Natural killer cell (primary cell): ENCODE measurements at regions of chr16 and their contacts with region 1.

Region 1: GRCh38 chr16:11915644-11916523 is at the start of gene GSPT1:
- DNase-seq: peak; percentile 98
- ATAC-seq: peak; percentile 90 to 98 (median 93)
- H3K4me3 ChIP-seq: peak within 1 kb of the TSS; percentile 79
- H3K4me3 Mint-ChIP-seq: peak within 1 kb of the TSS; percentile 89
- H3K27ac ChIP-seq: peak within 1 kb of the TSS; percentile 85
- H3K27ac Mint-ChIP-seq: peak within 1 kb of the TSS; percentile 78 to 90
- H3K4me1 ChIP-seq: peaks cover 12% of the 10 kb centered on the region
- H3K4me1 Mint-ChIP-seq: peaks cover 33 to 41% of the 10 kb centered on the region in 2 donors
- H3K27me3 ChIP-seq: no peaks in the 10 kb centered on the region
- H3K27me3 Mint-ChIP-seq: peaks cover 0 to 8% of the 10 kb centered on the region in 2 donors
- CTCF ChIP-seq: no peak
- total RNA-seq, gene GSPT1: 51.4 to 77.8 (median 60.8) TPM

Region 2: DNA sequence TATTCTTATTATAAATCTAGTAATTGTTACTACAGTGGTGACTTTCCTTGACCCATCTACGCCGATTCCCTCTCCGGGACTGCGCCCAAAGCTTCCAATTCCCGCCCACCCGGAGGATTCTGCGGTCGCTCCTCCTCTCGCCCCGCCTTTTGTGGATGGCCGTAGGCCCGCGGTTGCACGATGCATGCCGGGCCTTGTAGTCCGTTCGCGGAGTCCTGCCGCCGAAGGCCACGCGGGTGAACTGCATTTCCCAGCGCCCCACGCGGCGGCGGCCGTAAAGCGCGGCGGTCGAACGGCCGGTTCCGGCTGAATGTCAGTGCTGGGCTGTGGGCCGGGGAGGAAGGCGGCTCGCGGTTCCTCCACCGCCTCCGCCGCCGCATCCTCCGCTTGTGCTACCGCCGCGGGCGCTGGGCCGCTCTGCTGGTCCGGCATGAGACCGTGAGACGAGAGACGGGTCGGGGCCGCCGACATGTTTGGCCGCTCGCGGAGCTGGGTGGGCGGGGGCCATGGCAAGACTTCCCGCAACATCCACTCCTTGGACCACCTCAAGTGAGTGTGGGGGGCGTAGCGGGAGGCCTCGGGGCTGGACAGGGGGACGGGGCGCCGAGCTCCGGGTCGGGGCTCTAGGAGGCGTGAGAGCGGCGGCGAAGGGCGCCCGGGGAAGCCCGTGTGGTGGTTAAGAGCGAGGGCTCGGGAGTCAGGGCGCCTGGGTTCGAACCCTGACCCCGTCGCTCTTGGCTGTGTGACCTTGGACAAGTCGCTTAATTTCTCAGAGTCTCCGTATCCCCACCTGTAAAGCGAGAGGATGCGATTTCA is 971.4 kb before region 1 on chr16 and contains the start of gene CLEC16A:
- intact Hi-C with region 1: loop called (anchors 1 kb)
- DNase-seq: peak; percentile 96
- ATAC-seq: peak; percentile 77 to 91 (median 81)
- H3K4me3 ChIP-seq: peak within 1 kb of the TSS; percentile 90
- H3K4me3 Mint-ChIP-seq: peak within 1 kb of the TSS; percentile 88
- H3K27ac ChIP-seq: peak within 1 kb of the TSS; percentile 50
- H3K27ac Mint-ChIP-seq: peak within 1 kb of the TSS; percentile 65 to 93
- H3K4me1 ChIP-seq: peaks cover 54% of the 10 kb centered on the region
- H3K4me1 Mint-ChIP-seq: peaks cover 56 to 67% of the 10 kb centered on the region in 2 donors
- H3K27me3 ChIP-seq: no peaks in the 10 kb centered on the region
- H3K27me3 Mint-ChIP-seq: no peaks in the 10 kb centered on the region
- CTCF ChIP-seq: no peak
- total RNA-seq, gene CLEC16A: 35.9 to 50.5 (median 37.4) TPM

Region 3: DNA sequence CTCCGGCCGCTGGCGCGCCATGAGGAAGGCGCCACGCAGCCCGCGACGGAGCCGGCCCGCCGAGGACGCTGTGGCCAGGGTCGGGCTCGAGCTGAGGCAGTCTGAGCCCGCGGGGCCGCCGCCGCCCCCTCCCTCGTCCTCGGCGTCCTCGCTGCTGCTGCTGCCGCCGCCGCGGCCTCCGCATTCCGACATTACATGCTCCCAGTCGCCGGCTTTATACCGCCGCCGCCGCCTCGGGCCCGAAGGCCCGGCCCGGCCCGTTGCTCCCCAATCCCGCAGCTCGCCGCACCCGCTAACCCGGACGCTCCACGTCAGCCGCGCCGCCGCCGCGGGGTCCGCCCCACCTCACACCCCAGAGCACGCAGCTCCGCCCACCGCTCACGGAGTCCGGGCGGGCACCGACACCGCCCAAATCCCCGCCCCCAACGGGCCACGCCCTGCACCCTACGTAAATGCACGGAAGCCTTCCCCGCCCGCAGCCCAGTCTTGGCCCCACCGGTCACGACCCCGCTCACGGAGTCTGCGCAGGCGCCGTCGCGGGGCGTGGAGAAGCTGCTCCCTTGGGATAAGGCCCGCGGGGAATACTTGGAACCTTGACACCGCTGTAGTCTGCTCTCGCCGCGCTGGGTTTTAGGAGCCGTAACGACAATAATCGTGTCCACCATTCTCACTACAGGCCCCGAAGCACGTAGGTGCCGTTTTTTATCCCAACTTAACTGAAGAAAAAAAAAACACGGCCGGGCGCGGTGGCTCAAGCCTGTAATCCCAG is 173.2 kb before region 1 on chr16 and contains the start of gene TXNDC11:
- intact Hi-C with region 1: loop called (anchors 1 kb)
- DNase-seq: peak; percentile 99 to 100
- ATAC-seq: peak; percentile 88 to 98 (median 90)
- H3K4me3 ChIP-seq: peak within 1 kb of the TSS; percentile 93
- H3K4me3 Mint-ChIP-seq: peak within 1 kb of the TSS; percentile 97
- H3K27ac ChIP-seq: peak within 1 kb of the TSS; percentile 89
- H3K27ac Mint-ChIP-seq: peak within 1 kb of the TSS; percentile 92 to 94
- H3K4me1 ChIP-seq: peaks cover 33% of the 10 kb centered on the region
- H3K4me1 Mint-ChIP-seq: peaks cover 51 to 54% of the 10 kb centered on the region in 2 donors
- H3K27me3 ChIP-seq: no peaks in the 10 kb centered on the region
- H3K27me3 Mint-ChIP-seq: no peaks in the 10 kb centered on the region
- CTCF ChIP-seq: no peak
- total RNA-seq, gene TXNDC11: 63.4 to 99.2 (median 68.9) TPM

Region 4: GRCh38 chr16:11783319-11784037 is 132.4 kb before region 1 on chr16:
- intact Hi-C with region 1: loop called (anchors 10 kb)
- DNase-seq: peak; percentile 39 to 91
- ATAC-seq: peak; percentile 83 to 90 (median 84)
- H3K4me3 ChIP-seq: peak overlapping the region; percentile 30
- H3K4me3 Mint-ChIP-seq: peak overlapping the region; percentile 89
- H3K27ac ChIP-seq: peak overlapping the region; percentile 99
- H3K27ac Mint-ChIP-seq: peak overlapping the region; percentile 99 to 100
- H3K4me1 ChIP-seq: peaks cover 30% of the 10 kb centered on the region
- H3K4me1 Mint-ChIP-seq: peaks cover 47 to 51% of the 10 kb centered on the region in 2 donors
- H3K27me3 ChIP-seq: no peaks in the 10 kb centered on the region
- H3K27me3 Mint-ChIP-seq: no peaks in the 10 kb centered on the region
- CTCF ChIP-seq: no peak

Region 5: DNA sequence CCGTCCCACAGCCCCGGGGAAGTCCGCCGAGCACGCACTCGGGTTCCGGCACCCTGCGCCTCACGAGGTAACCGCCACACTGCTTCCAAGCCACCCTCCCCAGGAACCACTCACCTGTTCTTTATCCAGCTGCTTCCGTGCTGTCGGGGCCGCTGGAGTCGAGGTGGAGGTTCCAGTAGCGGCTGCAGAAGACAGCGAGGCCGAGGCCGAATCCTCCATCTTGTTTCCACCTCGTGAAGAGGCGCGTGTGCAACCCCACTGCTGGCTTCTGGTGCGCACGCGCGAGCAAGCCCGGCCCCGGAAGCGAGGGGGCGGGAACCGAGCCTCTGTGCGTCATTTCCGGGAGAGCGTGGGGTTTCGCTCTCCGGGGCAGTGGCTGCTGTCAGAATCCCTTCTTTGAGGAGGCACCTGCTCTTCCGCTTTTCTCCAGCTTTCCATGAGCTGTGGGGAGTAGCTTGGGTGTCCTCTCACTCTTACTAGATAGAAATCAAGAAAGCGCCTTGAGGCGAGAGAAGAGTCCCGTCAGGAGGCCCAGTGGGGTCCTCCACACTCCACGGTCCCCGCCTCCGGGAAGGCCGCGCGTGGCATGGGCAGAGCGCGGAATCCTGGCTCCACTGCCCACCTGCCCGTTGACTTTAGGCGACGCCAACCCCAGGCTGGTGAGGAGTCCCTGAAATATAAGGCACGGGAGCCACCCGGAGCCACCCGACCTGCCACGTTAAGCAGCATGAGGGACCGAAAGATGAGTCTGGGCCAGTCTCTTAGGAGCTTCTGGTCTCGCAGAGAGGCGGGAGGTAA is 64.4 kb before region 1 on chr16 and contains the start of gene RSL1D1:
- intact Hi-C with region 1: loop called (anchors 2 kb)
- DNase-seq: peak; percentile 98
- ATAC-seq: peak; percentile 80 to 91 (median 85)
- H3K4me3 ChIP-seq: peak within 1 kb of the TSS; percentile 91
- H3K4me3 Mint-ChIP-seq: peak within 1 kb of the TSS; percentile 99
- H3K27ac ChIP-seq: peak within 1 kb of the TSS; percentile 87
- H3K27ac Mint-ChIP-seq: peak within 1 kb of the TSS; percentile 97 to 98
- H3K4me1 ChIP-seq: peaks cover 24% of the 10 kb centered on the region
- H3K4me1 Mint-ChIP-seq: peaks cover 44 to 47% of the 10 kb centered on the region in 2 donors
- H3K27me3 ChIP-seq: no peaks in the 10 kb centered on the region
- H3K27me3 Mint-ChIP-seq: no peaks in the 10 kb centered on the region
- CTCF ChIP-seq: no peak
- total RNA-seq, gene RSL1D1: 66.3 to 102 (median 99.1) TPM

Region 6: GRCh38 chr16:11977376-11978041 is 61.6 kb after region 1 on chr16:
- intact Hi-C with region 1: loop called (anchors 10 kb)
- DNase-seq: peak in 1 of 2 donors; percentile 7
- ATAC-seq: no peak
- H3K4me3 ChIP-seq: peak overlapping the region; percentile 74
- H3K4me3 Mint-ChIP-seq: peak overlapping the region; percentile 98
- H3K27ac ChIP-seq: peak overlapping the region; percentile 40
- H3K27ac Mint-ChIP-seq: peak overlapping the region; percentile 94 to 97
- H3K4me1 ChIP-seq: peaks cover 26% of the 10 kb centered on the region
- H3K4me1 Mint-ChIP-seq: peaks cover 28 to 34% of the 10 kb centered on the region in 2 donors
- H3K27me3 ChIP-seq: no peaks in the 10 kb centered on the region
- H3K27me3 Mint-ChIP-seq: no peaks in the 10 kb centered on the region
- CTCF ChIP-seq: no peak